MCF 10A (cell line): ENCODE measurements at regions of chrX and their contacts with region 1.

Region 1: GRCh38 chrX:63350941-63351616 is at the start of gene SPIN4:
- DNase-seq: peak; percentile 78
- H3K4me3 Mint-ChIP-seq: peak within 1 kb of the TSS; percentile 86
- H3K27ac Mint-ChIP-seq: peak within 1 kb of the TSS; percentile 41
- H3K4me1 Mint-ChIP-seq: peaks cover 11% of the 10 kb centered on the region
- H3K27me3 Mint-ChIP-seq: no peaks in the 10 kb centered on the region
- CTCF ChIP-seq: no peak
- total RNA-seq, gene SPIN4: 4.6 and 6.9 TPM in 2 replicates

Region 2: GRCh38 chrX:63506320-63506719 is 155.2 kb after region 1 on chrX:
- CTCF ChIA-PET with region 1: no interaction called
- POLR2A ChIA-PET with region 1: no interaction called
- intact Hi-C with region 1: loop called (anchors 5 kb)
- DNase-seq: peak; percentile 44
- H3K4me3 Mint-ChIP-seq: no peak overlapping the region
- H3K27ac Mint-ChIP-seq: no peak overlapping the region
- H3K4me1 Mint-ChIP-seq: peaks cover 6% of the 10 kb centered on the region
- H3K27me3 Mint-ChIP-seq: no peaks in the 10 kb centered on the region
- CTCF ChIP-seq: peak; percentile 14

Region 3: GRCh38 chrX:63560601-63561218 is 209.6 kb after region 1 on chrX:
- CTCF ChIA-PET with region 1: no interaction called
- POLR2A ChIA-PET with region 1: interaction called, 3 read pairs
- intact Hi-C with region 1: loop called (anchors 2 kb)
- DNase-seq: peak; percentile 70
- H3K4me3 Mint-ChIP-seq: peak overlapping the region; percentile 99
- H3K27ac Mint-ChIP-seq: peak overlapping the region; percentile 97
- H3K4me1 Mint-ChIP-seq: peaks cover 4% of the 10 kb centered on the region
- H3K27me3 Mint-ChIP-seq: no peaks in the 10 kb centered on the region
- CTCF ChIP-seq: no peak